Right ventricle myocardium inferior (tissue), 1 donor: ENCODE measurements at regions of chr15 and their contacts with region 1.

Region 1: DNA sequence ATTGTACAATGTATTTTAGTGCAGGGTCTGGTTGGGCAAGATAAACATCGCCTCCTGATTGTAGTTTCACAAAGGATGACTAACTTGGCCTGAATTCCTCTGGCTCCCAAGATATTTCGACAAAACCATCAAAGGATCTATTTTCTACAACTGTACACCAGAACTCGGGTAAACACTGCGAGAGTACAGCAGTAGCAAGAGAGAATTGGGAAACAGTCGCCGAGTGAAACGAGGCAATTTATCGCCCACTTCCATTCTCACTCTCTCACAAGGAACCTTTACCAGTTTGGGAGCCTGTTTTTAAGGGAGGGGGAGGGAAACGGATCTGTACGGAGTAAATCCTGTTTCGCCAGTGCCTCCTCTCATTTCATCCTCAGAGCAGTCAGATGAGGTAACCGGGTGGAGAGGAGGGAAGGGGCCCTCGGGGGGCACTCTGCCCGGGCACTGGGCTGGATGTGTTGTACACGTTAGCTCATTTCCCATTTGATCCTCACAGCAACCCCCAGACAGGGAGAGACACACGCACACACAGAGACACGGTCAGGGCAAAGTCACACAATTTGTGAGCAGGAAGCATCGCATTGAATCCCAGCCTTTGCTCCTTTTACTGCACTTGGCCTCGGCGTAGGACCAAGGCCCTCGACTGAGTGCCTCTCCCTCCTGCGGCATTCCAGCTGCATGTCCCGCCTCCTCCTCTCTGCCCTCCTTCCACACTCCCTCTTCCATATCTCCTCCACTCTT is 120.1 kb downstream of the LIPC start:
- DNase-seq: no peak
- ATAC-seq: peak; percentile 47

Region 2: GRCh38 chr15:58521293-58521991 is 30.5 kb before region 1 on chr15:
- intact Hi-C with region 1: no loop called
- DNase-seq: peak; percentile 70
- ATAC-seq: peak; percentile 25

Region 3: DNA sequence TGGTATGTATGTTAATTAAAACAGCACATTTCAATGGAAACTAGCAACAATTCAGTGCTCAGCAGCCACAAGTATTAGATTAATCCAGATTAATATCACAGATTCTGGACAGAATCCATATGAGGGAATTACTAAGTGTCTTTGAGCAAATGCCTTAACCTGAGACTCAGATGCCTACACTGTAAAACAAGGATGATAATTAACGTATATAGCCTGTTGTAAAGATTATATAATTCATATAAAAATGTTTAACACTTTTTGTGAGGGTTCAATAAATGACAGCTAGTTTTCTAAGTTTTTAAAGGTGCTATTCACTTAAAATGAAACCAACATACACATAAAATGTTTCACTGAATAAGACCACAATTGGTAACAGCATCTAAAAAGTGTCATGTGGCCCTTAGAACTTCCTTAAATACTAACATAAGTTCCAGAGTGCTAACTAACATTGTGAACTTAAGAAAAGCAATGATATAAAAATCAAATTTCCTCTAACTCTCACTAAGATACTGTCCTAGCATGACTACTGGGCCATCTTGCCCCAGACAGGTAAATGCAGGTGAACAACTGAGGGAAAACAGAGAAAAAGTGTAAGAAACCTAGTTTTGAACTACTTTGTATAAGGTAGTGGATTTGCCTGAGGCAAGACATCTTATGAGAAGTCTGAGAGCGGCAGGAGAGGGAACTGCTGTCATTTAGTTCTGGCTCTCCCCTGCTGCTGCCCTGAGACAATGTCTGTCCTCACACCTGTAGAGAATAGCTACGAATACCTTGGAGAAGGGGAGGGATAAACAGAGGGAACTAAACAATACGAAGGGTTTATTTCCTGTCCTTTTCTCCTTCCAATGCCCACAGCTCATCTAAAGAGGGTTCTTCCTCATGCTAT is 46.3 kb after region 1 on chr15:
- intact Hi-C with region 1: loop called (anchors 5 kb)
- DNase-seq: no peak
- ATAC-seq: no peak

Region 4: GRCh38 chr15:58611731-58612676 is 60.1 kb after region 1 on chr15:
- intact Hi-C with region 1: no loop called
- DNase-seq: no peak
- ATAC-seq: no peak

Region 5: DNA sequence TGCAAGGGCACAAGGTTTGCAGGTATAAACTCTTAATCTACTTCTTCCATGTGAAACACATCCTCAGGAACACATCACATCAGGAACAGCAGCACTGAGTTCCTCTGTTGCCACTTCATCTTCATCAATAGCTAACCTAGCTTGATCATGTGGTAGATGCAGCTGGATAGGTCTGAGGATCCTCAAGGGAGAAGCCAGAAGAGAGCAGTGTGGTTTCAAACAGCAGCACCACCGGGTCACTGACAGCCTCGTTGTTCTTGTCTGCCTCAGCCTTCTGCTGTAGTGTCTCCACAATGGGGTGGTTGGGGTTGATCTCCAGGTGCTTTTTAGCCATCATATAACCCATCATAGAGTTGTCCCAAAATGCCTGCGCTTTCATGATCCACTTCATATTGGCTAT is 138.8 kb after region 1 on chr15:
- intact Hi-C with region 1: no loop called
- DNase-seq: no peak
- ATAC-seq: no peak